Panc1 (cell line): ENCODE measurements at regions of chr6 and their contacts with region 1.

Region 1: GRCh38 chr6:43193939-43194338 is 11.9 kb downstream of the CUL9 start:
- DNase-seq: no peak
- ATAC-seq: no peak
- H3K4me3 ChIP-seq: no peak overlapping the region
- H3K27ac ChIP-seq: no peak overlapping the region
- H3K4me1 ChIP-seq: no peaks in the 10 kb centered on the region
- H3K27me3 ChIP-seq: no peaks in the 10 kb centered on the region
- CTCF ChIP-seq: no peak

Region 2: DNA sequence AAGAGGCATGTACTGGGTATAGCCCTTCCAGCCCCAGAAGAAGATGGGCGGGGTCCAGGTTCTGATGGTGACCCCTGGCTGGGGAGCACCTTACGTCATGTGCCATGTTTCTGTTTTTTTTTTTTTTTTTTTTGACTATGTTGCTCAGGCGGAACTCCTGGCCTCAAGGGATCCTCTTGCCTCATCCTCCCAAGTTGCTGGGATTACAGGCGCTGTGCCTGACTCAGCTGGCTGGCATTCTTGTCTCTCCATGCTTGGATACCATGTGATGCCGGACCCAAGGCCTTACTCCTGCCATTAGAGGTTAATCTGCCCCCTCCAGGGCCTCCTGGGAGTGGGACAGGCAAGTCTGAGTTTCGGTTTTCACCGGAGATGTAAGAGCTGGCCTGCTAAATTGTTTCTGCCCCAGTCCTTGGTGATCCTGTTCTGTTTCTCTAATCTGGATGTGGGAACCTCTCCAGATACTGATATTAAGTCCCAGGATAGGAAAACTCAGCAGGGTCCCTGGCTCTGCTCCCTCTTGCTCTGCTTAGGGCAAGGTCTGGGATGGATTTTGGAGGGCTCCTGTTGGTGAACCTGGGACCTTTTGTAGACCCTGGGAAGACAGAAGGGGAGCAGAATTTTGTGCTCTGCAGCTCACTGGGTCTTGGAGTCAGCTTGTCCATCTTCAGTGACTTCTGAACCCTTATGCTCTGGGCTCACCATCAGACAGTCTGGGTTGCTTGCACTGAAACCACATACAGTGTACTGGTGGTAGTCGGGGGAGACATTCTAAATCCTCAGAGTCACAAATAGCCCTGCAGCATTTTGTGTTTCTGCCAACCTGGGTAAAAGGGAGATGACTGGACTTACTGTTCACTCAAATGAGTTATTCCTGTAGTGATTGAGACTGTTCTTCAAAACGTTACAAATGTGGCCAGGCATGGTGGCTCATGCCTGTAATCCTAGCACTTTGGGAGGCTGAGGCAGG is 72.7 kb before region 1 on chr6:
- CTCF ChIA-PET with region 1: no interaction called
- POLR2A ChIA-PET with region 1: no interaction called
- in situ Hi-C with region 1: no loop called
- intact Hi-C with region 1: no loop called
- DNase-seq: no peak
- ATAC-seq: peak; percentile 72
- H3K4me3 ChIP-seq: no peak overlapping the region
- H3K27ac ChIP-seq: peak overlapping the region; percentile 83
- H3K4me1 ChIP-seq: peaks cover 51% of the 10 kb centered on the region
- H3K27me3 ChIP-seq: no peaks in the 10 kb centered on the region
- CTCF ChIP-seq: no peak

Region 3: GRCh38 chr6:43180985-43181384 is 13.0 kb before region 1 on chr6:
- CTCF ChIA-PET with region 1: no interaction called
- POLR2A ChIA-PET with region 1: interaction called, 14 read pairs
- in situ Hi-C with region 1: no loop called
- intact Hi-C with region 1: no loop called
- DNase-seq: no peak
- ATAC-seq: no peak
- H3K4me3 ChIP-seq: no peak overlapping the region
- H3K27ac ChIP-seq: peak overlapping the region; percentile 96
- H3K4me1 ChIP-seq: peaks cover 21% of the 10 kb centered on the region
- H3K27me3 ChIP-seq: no peaks in the 10 kb centered on the region
- CTCF ChIP-seq: no peak